ENCODE measurements at regions of chr10 and their contacts with region 1.

Region 1: DNA sequence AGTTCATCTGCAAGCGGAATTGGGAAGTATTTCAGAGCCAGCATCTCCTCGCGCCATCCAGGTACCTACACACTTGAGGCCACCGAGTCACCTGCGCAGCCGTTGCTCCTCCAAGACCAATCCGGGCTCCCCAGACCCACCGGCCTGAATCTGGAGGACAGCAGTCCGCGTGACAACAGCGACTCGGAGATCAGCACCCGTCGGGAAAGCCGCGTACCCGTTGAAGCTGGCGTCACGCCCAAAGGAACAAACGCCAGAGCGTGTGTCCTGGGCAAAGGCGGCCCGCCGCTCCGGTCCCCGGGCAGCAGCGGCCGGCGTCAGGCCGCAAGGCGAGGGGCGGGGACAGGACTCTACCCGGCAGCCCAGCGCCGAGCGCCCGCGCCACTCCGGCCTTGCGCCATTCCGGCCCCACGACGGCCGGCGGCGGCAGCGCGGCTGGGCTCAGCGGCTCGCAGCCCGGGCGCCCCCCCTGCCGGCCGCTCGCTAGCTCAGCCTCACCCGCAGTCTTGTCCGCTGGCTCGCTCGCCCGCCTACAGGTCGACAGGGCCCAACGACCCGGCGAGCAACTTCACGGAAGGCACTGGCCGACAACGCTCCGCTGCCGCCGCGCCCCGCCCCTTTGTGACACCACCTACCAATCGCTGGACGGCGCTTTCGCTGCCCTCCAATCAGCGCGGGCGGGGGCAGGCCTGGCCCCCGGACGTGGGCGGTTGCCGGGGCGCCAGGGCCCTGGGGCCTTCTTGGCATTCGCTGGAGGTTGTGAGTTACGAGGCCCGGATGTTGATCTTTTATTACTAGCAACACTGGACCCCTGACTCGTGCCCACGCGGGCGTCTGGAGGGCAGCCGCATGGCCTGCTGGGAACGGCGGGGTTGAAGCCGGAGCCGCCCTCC is at the start of gene ZFAND4:
- DNase-seq: peak; percentile 99
- total RNA-seq, gene ZFAND4: 7.7 TPM

Region 2: DNA sequence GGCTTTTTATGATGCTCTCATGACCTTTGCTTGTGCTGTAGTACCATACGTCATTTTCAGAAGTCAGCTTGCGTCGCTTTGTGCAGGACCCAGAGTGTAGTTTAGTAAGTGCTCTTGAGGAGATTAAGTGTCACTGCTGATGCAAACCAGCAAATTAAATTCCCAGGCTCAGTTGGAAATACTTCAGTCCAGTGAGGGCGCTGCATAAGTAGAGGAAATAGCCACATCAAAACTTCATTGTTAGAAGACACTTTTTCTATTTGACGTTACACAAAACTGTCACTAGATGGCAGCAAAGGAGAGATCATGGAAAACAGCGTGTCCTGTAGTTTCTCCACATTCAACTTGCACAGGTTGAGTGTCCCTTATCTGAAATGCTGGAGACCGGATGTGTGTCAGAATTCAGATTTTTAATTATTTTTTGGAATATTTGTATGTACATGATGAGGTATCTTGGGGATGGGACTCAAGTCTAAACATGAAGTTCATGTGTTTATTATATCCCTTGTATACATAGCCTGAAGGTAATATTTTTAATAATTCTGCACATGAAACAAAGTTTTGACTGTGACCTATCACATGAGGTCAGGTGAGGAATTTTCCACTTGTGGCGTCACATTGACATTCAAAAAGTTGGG is 663.8 kb before region 1 on chr10:
- intact Hi-C with region 1: loop called (anchors 5 kb)
- DNase-seq: no peak

Region 3: DNA sequence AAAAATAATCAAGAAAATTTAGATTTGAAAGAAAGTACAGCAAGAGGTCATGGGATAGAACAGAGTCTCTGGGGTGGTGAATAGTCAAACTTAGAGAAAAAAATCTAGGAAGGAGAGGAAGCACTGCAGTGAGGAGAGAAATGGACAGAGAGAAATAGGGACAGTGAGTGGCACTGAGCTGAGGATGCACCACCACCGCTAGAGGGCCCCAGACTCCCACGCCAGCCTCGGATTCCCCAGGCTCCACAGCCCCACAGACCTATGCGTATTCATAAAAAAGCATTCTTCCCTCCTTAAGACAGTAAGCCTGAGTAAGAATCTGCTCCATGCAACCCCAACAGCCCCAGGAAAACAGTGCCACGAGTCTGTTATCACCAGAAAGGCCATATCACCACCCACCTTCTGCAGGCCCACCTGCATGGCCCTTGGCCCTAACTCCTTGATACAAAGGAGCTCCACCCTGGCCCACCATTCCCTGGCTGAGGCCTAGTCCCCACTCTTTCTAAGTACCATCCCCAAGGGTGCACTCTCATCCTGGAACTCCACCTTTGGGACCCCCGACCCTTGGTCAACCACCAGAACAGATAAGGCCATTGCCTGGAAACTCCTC is 207.4 kb before region 1 on chr10:
- intact Hi-C with region 1: loop called (anchors 5 kb)
- DNase-seq: peak; percentile 92